PC-3 (cell line): ENCODE measurements at regions of chr16 and their contacts with region 1.

Region 1: GRCh38 chr16:3983081-3983520 is 102.6 kb upstream of the CREBBP start:
- DNase-seq: peak; percentile 75
- ATAC-seq: peak; percentile 96
- H3K4me3 ChIP-seq: no peak overlapping the region
- H3K27ac ChIP-seq: no peak overlapping the region
- H3K4me1 ChIP-seq: peaks cover 8% of the 10 kb centered on the region; the same call in 1 of the 2 replicates
- H3K27me3 ChIP-seq: no peaks in the 10 kb centered on the region
- CTCF ChIP-seq: peak; percentile 77

Region 2: GRCh38 chr16:3554351-3554928 is 428.7 kb before region 1 on chr16:
- CTCF ChIA-PET with region 1: interaction called, 10 read pairs
- POLR2A ChIA-PET with region 1: no interaction called
- intact Hi-C with region 1: no loop called
- DNase-seq: no peak
- ATAC-seq: no peak
- H3K4me3 ChIP-seq: no peak overlapping the region
- H3K27ac ChIP-seq: no peak overlapping the region
- H3K4me1 ChIP-seq: no peaks in the 10 kb centered on the region
- H3K27me3 ChIP-seq: no peaks in the 10 kb centered on the region
- CTCF ChIP-seq: no peak

Region 3: GRCh38 chr16:3880623-3881498 is 102.2 kb before region 1 on chr16 and contains the start of gene CREBBP:
- CTCF ChIA-PET with region 1: no interaction called
- POLR2A ChIA-PET with region 1: no interaction called
- intact Hi-C with region 1: no loop called
- DNase-seq: peak; percentile 83
- ATAC-seq: peak; percentile 87
- H3K4me3 ChIP-seq: peak within 1 kb of the TSS; percentile 91
- H3K27ac ChIP-seq: no peak within 1 kb of the TSS
- H3K4me1 ChIP-seq: peaks cover 17% of the 10 kb centered on the region
- H3K27me3 ChIP-seq: no peaks in the 10 kb centered on the region
- CTCF ChIP-seq: no peak
- total RNA-seq, gene CREBBP: 21.9 and 23.6 TPM in 2 replicates

Region 4: GRCh38 chr16:4116337-4117249 is 133.5 kb after region 1 on chr16 and contains the start of gene ADCY9:
- CTCF ChIA-PET with region 1: interaction called, 3 read pairs
- POLR2A ChIA-PET with region 1: no interaction called
- intact Hi-C with region 1: loop called (anchors 10 kb)
- DNase-seq: peak; percentile 66
- ATAC-seq: peak; percentile 72
- H3K4me3 ChIP-seq: peak within 1 kb of the TSS; percentile 71
- H3K27ac ChIP-seq: no peak within 1 kb of the TSS
- H3K4me1 ChIP-seq: peaks cover 30% of the 10 kb centered on the region
- H3K27me3 ChIP-seq: no peaks in the 10 kb centered on the region
- CTCF ChIP-seq: no peak
- total RNA-seq, gene ADCY9: 6.2 and 9.9 TPM in 2 replicates